CD4-positive, alpha-beta memory T cell (primary cell): ENCODE measurements at regions of chr13 and their contacts with region 1.

Region 1: GRCh38 chr13:102460801-102461200 is 59.0 kb upstream of the FGF14 start:
- DNase-seq: no peak
- H3K4me3 ChIP-seq: no peak overlapping the region
- H3K4me3 Mint-ChIP-seq: no peak overlapping the region
- H3K27ac ChIP-seq: no peak overlapping the region
- H3K27ac Mint-ChIP-seq: no peak overlapping the region
- H3K4me1 ChIP-seq: no peaks in the 10 kb centered on the region
- H3K4me1 Mint-ChIP-seq: peaks cover 4 to 6% (median 5%) of the 10 kb centered on the region in 4 donors
- H3K27me3 ChIP-seq: no peaks in the 10 kb centered on the region
- H3K27me3 Mint-ChIP-seq: peaks cover 10 to 11% of the 10 kb centered on the region in 2 donors

Region 2: DNA sequence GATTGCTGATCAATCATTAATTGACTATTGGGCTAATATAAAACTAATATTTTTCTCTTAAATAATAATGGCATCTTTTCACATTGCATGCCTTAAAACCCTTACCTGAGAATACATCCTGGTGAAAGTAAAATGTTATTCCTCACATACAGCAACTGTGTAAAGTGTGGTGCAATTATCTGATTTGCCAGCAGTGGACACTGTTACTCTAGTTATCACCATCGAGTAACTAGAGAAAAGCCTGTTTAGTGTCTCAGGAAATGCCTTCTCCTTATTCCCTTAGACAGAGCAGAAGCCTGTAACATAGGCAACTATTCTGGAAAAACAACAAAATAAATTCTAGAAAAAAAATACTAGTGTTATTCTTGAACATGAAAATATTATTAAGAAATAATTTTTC is 518.8 kb before region 1 on chr13:
- CTCF ChIA-PET with region 1: no interaction called
- POLR2A ChIA-PET with region 1: no interaction called
- intact Hi-C with region 1: loop called (anchors 5 kb)
- DNase-seq: no peak
- H3K4me3 ChIP-seq: no peak overlapping the region
- H3K4me3 Mint-ChIP-seq: no peak overlapping the region
- H3K27ac ChIP-seq: no peak overlapping the region
- H3K27ac Mint-ChIP-seq: no peak overlapping the region
- H3K4me1 ChIP-seq: no peaks in the 10 kb centered on the region
- H3K4me1 Mint-ChIP-seq: no peaks in the 10 kb centered on the region
- H3K27me3 ChIP-seq: no peaks in the 10 kb centered on the region
- H3K27me3 Mint-ChIP-seq: peaks cover 5 to 7% of the 10 kb centered on the region in 2 donors

Region 3: DNA sequence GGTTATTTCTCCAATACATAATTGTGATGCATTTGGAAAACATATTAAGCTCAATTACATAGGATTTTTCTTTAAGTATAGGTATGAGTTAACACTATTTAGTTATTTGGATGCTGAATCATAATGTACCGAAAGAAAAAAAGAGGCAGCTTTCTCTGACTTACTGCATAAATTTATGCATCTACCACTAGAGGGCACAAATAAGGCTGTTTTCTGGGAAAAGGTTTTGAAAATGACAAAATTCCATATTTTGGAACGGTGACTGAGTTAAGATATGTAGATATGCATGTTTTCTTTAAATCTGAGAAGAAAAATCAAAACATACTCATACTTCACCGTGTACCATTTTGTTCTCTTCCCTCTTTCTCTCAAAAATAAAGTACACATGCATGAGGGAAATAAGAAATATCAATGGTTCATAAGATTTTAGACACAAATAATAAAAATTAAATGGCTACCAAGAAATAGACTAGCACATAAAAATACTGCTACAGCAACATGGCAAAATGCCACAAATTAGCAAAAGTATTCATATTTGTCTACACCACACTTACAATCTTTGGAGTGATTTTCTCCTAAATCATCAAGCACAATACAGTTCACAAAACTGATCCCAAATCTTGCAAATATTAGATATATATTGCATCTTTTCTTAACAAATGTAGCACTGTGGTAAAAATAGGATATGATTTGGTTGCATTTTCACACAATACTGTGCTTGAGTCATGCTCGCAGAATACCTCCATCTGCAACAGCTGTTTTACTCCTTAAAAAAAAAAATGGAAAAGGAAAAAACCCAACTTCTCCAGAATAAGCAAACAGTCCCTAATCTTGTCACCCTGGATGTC is 319.0 kb before region 1 on chr13:
- CTCF ChIA-PET with region 1: interaction called, 6 read pairs
- POLR2A ChIA-PET with region 1: no interaction called
- intact Hi-C with region 1: loop called (anchors 2 kb)
- DNase-seq: peak in 1 of 5 donors; percentile 1
- H3K4me3 ChIP-seq: no peak overlapping the region
- H3K4me3 Mint-ChIP-seq: no peak overlapping the region
- H3K27ac ChIP-seq: no peak overlapping the region
- H3K27ac Mint-ChIP-seq: no peak overlapping the region
- H3K4me1 ChIP-seq: no peaks in the 10 kb centered on the region
- H3K4me1 Mint-ChIP-seq: no peaks in the 10 kb centered on the region
- H3K27me3 ChIP-seq: no peaks in the 10 kb centered on the region
- H3K27me3 Mint-ChIP-seq: no peaks in the 10 kb centered on the region

Region 4: GRCh38 chr13:102999499-102999898 is 538.7 kb after region 1 on chr13:
- CTCF ChIA-PET with region 1: no interaction called
- POLR2A ChIA-PET with region 1: no interaction called
- intact Hi-C with region 1: no loop called
- DNase-seq: no peak
- H3K4me3 ChIP-seq: no peak overlapping the region
- H3K4me3 Mint-ChIP-seq: no peak overlapping the region
- H3K27ac ChIP-seq: no peak overlapping the region
- H3K27ac Mint-ChIP-seq: no peak overlapping the region
- H3K4me1 ChIP-seq: no peaks in the 10 kb centered on the region
- H3K4me1 Mint-ChIP-seq: no peaks in the 10 kb centered on the region
- H3K27me3 ChIP-seq: no peaks in the 10 kb centered on the region
- H3K27me3 Mint-ChIP-seq: peaks cover 0 to 2% of the 10 kb centered on the region in 2 donors